ENCODE measurements at regions of chr10 and their contacts with region 1.

Region 1: DNA sequence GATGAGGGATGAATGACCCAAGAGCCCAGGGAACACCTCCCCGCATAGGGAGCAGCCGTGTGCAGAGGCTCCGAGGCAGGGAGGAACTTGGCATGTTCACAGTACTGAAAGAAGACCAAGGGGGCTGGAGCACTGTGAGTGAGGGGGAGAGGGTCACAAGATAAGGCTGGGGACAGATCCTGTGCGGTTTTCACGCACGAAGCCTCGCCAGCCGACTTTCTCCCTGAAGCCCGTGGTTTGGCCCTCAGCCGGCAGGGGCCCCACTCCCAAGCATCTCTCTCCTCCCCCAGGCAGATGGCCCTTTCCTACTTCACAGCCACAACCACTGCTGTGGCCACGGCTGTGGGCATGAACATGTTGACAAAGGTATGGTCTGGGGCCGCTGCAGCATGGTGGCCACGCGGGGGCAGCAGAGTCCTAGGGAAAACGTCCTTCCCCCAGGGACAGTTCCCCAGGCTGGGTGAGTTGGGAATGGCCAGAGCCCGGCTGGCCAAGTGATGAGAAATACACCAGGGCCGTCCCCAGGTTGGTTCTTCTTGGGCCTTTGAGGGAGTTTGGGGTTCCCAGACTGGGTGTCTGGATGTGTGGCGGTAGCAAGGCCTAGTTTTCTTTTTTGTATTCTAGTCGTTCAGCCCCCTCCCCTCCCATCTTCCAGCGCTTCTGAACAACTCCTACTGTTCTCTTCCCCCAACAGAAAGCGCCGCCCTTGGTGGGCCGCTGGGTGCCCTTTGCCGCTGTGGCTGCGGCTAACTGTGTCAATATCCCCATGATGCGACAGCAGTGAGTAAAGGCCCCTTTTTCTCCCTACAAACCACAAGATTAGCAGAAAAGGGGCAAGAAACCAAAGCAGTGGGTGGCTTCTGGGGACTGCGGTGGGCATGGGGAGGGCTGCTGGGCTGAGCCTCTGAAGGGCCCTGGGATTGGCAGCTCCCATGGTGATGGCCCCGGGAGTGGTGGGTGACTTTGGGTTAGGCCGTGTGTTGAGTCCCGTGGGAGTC is 14.4 kb upstream of the WBP1L start:
- DNase-seq: peak; percentile 95

Region 2: DNA sequence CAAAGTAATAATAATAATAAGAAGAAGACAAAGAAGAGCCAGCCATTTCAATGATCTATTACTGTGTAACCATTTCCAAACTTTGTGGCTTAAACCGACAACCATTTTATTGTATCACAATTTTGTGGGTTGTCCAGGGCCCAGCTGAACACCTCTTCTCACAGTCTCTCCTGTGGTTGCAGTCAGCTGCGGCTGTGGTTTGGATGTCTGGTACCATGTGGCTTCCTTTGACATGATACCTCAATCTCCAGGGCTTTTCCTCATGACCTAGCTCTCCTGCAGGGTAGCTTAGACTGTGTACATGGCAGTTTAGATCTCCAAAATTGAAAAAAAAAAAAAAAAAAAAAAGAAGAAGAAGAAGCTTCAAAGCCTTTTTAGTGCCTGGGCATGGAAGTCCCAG is 406.4 kb before region 1 on chr10:
- intact Hi-C with region 1: no loop called
- DNase-seq: no peak

Region 3: GRCh38 chr10:102900006-102900405 is 170.7 kb after region 1 on chr10:
- intact Hi-C with region 1: loop called (anchors 2 kb)
- DNase-seq: no peak

Measured in cardiac septum (tissue), 1 donor.